Gastrocnemius medialis (tissue), 4 donors: ENCODE measurements at regions of chr11 and their contacts with region 1.

Region 1: GRCh38 chr11:20056109-20056949 is 103.9 kb downstream of the DBX1 start:
- DNase-seq: peak; percentile 58
- ATAC-seq: peak; percentile 54 to 74
- H3K4me3 ChIP-seq: no peak overlapping the region
- H3K27ac ChIP-seq: peak overlapping the region; percentile 67 to 87 (median 79)
- H3K4me1 ChIP-seq: peaks cover 34 to 45% of the 10 kb centered on the region in 2 donors
- H3K27me3 ChIP-seq: no peaks in the 10 kb centered on the region
- CTCF ChIP-seq: no peak
- POLR2A ChIP-seq: no peak

Region 2: GRCh38 chr11:19995131-19995530 is 61.2 kb before region 1 on chr11:
- in situ Hi-C with region 1: no loop called
- intact Hi-C with region 1: loop called (anchors 2 kb)
- DNase-seq: peak; percentile 63 to 67
- ATAC-seq: peak; percentile 98
- H3K4me3 ChIP-seq: no peak overlapping the region
- H3K27ac ChIP-seq: peak overlapping the region; percentile 51 to 79 (median 68)
- H3K4me1 ChIP-seq: peaks cover 0 to 15% of the 10 kb centered on the region in 2 donors
- H3K27me3 ChIP-seq: no peaks in the 10 kb centered on the region
- CTCF ChIP-seq: no peak
- POLR2A ChIP-seq: peak in 1 of 2 donors; percentile 44

Region 3: DNA sequence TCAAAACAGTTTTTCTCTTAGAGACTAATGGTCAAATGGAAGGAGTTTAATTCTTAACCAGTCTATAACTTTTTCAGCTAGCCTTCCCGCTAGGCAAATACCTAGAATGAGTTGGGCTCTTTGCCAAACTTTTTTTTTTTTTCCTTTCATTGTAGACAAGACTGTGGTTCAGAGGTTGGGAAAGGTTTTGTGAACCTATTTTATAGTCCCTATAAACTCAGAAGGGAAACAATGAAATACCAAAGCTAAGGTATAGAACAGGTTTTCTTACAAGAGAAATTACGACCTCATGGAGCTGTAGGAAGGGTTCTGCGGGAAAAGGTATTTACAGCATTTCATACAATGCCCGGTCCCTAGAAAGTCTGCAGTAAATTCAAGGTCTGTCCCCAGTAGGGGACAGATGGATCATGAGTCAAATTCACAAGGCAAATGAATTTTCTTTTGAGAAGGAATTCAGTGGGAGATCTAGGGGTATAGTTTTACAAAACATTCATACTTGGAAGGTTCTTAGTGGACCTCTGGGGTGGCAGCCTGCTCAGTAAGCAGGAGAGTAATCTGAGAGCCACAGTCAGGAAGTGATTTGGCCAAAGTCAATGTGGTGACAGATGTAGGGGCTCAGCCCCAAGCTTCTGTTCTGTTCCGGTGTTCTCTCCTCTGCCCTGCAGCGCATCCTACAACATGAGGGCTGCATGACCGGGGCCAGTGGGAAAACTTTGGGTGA is 42.8 kb before region 1 on chr11:
- in situ Hi-C with region 1: no loop called
- intact Hi-C with region 1: loop called (anchors 5 kb)
- DNase-seq: peak; percentile 55
- ATAC-seq: peak; percentile 94 to 98
- H3K4me3 ChIP-seq: peak overlapping the region in 3 of 4 donors; percentile 8 to 14 (median 14)
- H3K27ac ChIP-seq: peak overlapping the region; percentile 35 to 68 (median 59)
- H3K4me1 ChIP-seq: peaks cover 10 to 12% of the 10 kb centered on the region in 2 donors
- H3K27me3 ChIP-seq: no peaks in the 10 kb centered on the region
- CTCF ChIP-seq: no peak
- POLR2A ChIP-seq: peak in 1 of 2 donors; percentile 28

Region 4: GRCh38 chr11:20197881-20198280 is 141.6 kb after region 1 on chr11:
- in situ Hi-C with region 1: no loop called
- intact Hi-C with region 1: no loop called
- DNase-seq: no peak
- ATAC-seq: no peak
- H3K4me3 ChIP-seq: no peak overlapping the region
- H3K27ac ChIP-seq: no peak overlapping the region
- H3K4me1 ChIP-seq: no peaks in the 10 kb centered on the region
- H3K27me3 ChIP-seq: no peaks in the 10 kb centered on the region
- CTCF ChIP-seq: no peak
- POLR2A ChIP-seq: no peak